ENCODE measurements at regions of chr1 and their contacts with region 1.

Region 1: GRCh38 chr1:77888081-77888780 is at the start of gene NEXN:
- DNase-seq: peak; percentile 78 to 91
- H3K4me3 ChIP-seq: peak within 1 kb of the TSS; percentile 96 to 97
- H3K27ac ChIP-seq: peak within 1 kb of the TSS; percentile 97 to 98
- H3K4me1 ChIP-seq: peaks cover 0 to 62% (median 9%) of the 10 kb centered on the region in 4 donors
- H3K27me3 ChIP-seq: no peaks in the 10 kb centered on the region
- CTCF ChIP-seq: no peak

Region 2: DNA sequence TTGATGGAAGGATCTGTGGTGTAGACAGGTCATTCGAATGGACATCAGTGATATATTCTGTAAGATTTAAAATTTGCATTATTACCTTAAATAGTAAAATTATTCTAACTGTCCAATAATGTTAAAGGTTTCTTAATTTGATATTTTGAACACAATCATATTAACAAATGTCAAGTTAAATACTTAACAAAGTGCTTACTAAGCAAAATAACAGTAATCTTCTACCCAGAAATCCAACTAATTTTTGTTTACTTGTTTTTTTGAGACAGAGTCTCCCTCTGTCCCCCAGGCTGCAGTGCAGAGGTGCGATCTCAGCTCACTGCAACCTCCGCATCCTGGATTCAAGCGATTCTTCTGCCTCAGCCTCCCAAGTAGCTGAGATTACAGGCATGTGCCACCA is 162.5 kb before region 1 on chr1:
- intact Hi-C with region 1: no loop called
- DNase-seq: no peak
- H3K4me3 ChIP-seq: no peak overlapping the region
- H3K27ac ChIP-seq: no peak overlapping the region
- H3K4me1 ChIP-seq: no peaks in the 10 kb centered on the region
- H3K27me3 ChIP-seq: no peaks in the 10 kb centered on the region
- CTCF ChIP-seq: no peak

Region 3: DNA sequence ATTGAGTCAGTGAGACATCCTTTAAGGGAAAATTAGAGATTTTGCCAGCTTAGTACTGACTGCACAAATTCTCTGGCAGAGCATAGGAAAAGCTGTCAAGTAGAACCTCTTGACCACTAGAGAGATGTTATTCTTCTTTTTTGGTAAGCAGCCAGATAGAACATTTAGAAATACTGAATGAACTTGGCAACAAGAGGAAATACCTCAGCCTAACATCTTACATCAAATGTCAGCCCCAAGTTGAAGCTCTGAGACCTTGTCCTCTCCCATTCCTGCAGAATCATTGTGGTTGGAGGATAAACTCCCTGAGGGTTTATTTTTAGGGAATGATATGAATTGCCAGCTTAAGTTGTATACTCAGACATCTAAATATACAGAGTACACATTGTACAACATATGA is 55.3 kb before region 1 on chr1:
- intact Hi-C with region 1: loop called (anchors 10 kb)
- DNase-seq: no peak
- H3K4me3 ChIP-seq: no peak overlapping the region
- H3K27ac ChIP-seq: peak overlapping the region; percentile 76 to 77
- H3K4me1 ChIP-seq: peaks cover 0 to 78% (median 55%) of the 10 kb centered on the region in 4 donors
- H3K27me3 ChIP-seq: no peaks in the 10 kb centered on the region
- CTCF ChIP-seq: no peak

Region 4: GRCh38 chr1:78519446-78519845 is 631.2 kb after region 1 on chr1:
- intact Hi-C with region 1: no loop called
- DNase-seq: no peak
- H3K4me3 ChIP-seq: no peak overlapping the region
- H3K27ac ChIP-seq: no peak overlapping the region
- H3K4me1 ChIP-seq: no peaks in the 10 kb centered on the region
- H3K27me3 ChIP-seq: no peaks in the 10 kb centered on the region
- CTCF ChIP-seq: no peak

Measured in tibial artery (tissue), 4 donors.